ENCODE measurements at regions of chr4 and their contacts with region 1.

Region 1: DNA sequence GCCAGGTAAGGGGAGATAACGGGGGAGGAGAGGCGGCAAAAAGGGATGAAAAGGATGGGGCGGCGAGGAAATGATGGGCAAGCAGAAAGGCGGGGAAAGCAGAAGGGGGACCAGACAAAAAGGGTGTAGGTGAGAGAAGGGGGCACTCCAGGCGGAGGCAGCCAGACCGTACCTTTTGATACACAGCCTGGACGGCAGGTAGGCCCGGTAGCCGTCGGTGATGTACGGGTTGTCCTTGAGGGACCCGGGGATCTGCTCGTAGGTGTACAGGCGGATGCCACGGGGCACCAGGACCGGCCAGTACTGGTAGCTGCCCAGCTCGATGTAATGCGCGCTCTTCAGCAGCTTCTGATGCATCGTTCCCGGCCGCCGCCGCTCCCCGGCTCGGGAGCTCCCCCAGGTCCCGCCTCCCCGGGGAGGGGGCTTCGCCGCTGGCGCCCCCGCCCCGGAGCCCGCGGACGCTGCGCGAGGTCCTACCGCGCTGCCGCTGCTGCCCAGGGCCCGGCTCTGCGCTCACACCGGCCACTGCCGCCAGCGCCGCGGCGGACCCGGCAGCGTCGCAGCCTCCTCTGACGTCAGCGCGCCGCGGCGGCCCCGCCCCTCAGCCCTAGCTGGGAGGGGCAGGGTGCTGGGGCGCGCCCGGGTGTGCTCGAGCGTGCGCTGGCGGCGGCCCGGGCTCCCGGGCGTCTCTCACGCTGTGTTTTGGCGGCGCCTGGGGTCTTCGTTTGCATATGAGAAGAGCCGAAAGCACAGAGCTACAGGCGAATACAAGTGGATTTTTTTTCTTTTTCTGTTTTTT is at the start of gene PAQR3:
- DNase-seq: peak; percentile 41 to 75
- H3K4me3 ChIP-seq: peak within 1 kb of the TSS; percentile 72
- H3K27ac ChIP-seq: no peak within 1 kb of the TSS
- H3K4me1 ChIP-seq: peaks cover 9% of the 10 kb centered on the region
- H3K27me3 ChIP-seq: no peaks in the 10 kb centered on the region
- CTCF ChIP-seq: no peak
- total RNA-seq, gene PAQR3: 7.9 and 11.0 TPM in 2 replicates

Region 2: GRCh38 chr4:77905644-77906263 is 1033.3 kb before region 1 on chr4:
- CTCF ChIA-PET with region 1: no interaction called
- POLR2A ChIA-PET with region 1: interaction called, 10 read pairs
- intact Hi-C with region 1: no loop called
- DNase-seq: no peak
- H3K4me3 ChIP-seq: no peak overlapping the region
- H3K27ac ChIP-seq: no peak overlapping the region
- H3K4me1 ChIP-seq: no peaks in the 10 kb centered on the region
- H3K27me3 ChIP-seq: no peaks in the 10 kb centered on the region
- CTCF ChIP-seq: no peak

Region 3: GRCh38 chr4:78645853-78646757 is 293.0 kb before region 1 on chr4:
- CTCF ChIA-PET with region 1: interaction called, 13 read pairs
- POLR2A ChIA-PET with region 1: no interaction called
- intact Hi-C with region 1: no loop called
- DNase-seq: peak; percentile 45 to 78
- H3K4me3 ChIP-seq: peak overlapping the region; percentile 48; the same call in 1 of the 2 replicates
- H3K27ac ChIP-seq: peak overlapping the region; percentile 88
- H3K4me1 ChIP-seq: peaks cover 81% of the 10 kb centered on the region
- H3K27me3 ChIP-seq: no peaks in the 10 kb centered on the region
- CTCF ChIP-seq: no peak

Region 4: GRCh38 chr4:80139671-80140070 is 1200.6 kb after region 1 on chr4:
- CTCF ChIA-PET with region 1: no interaction called
- POLR2A ChIA-PET with region 1: interaction called, 11 read pairs
- intact Hi-C with region 1: no loop called
- DNase-seq: no peak
- H3K4me3 ChIP-seq: no peak overlapping the region
- H3K27ac ChIP-seq: no peak overlapping the region
- H3K4me1 ChIP-seq: peaks cover 36% of the 10 kb centered on the region
- H3K27me3 ChIP-seq: no peaks in the 10 kb centered on the region
- CTCF ChIP-seq: no peak